ENCODE measurements at regions of chr12 and their contacts with region 1.

Region 1: GRCh38 chr12:2877047-2877952 is at the starts of genes FOXM1 and RHNO1:
- DNase-seq: peak; percentile 81
- H3K4me3 ChIP-seq: peak within 1 kb of the TSS; percentile 63 to 89 (median 77)
- H3K27ac ChIP-seq: peak within 1 kb of the TSS; percentile 89
- H3K4me1 ChIP-seq: peaks cover 18% of the 10 kb centered on the region
- H3K27me3 ChIP-seq: no peaks in the 10 kb centered on the region
- CTCF ChIP-seq: no peak
- total RNA-seq, gene FOXM1: 1.0 to 49.9 TPM
- total RNA-seq, gene RHNO1: 27.0 to 45.1 TPM

Region 2: DNA sequence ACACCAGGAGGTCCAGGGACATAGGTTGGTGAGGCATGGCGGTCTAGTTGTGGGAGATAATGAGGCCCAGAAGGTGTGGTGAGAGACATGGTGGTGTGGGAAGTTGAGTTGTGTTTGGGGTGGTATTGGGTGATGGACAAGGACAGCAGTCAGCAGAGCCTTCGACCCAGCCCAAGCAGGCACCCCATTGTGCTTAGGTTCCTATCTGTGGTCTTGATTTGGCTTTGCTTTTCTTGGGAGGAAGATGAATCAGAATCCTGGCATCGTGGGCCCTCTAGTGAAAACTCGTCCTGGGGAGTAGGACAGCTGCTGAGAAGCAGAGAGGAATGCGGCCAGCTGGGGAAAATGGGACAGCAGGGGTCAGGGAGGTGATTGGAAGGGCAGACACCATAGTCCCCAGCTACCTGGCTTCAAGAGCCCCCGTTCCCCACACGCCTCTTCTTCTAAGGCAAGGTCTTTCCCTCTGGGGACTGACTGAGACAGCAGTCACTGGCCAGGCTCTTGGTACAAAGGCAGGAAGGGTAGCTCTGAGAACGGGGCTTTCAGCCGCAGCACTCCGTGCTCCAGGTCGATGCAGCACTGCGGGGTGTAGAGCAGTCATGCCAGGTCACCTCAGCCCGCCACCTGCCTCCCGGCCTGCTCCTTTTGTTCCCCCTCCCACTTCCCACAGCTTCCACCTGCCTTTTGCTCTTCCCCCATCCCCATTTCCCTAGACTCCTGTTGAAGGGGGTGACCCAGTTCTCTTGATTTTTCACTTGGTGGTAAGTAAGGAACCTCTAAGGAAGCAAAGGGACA is 50.4 kb before region 1 on chr12:
- CTCF ChIA-PET with region 1: no interaction called
- dilution Hi-C with region 1: loop called (anchors 5 kb)
- in situ Hi-C with region 1: no loop called
- intact Hi-C with region 1: no loop called
- DNase-seq: no peak
- H3K4me3 ChIP-seq: no peak overlapping the region
- H3K27ac ChIP-seq: no peak overlapping the region
- H3K4me1 ChIP-seq: no peaks in the 10 kb centered on the region
- H3K27me3 ChIP-seq: no peaks in the 10 kb centered on the region
- CTCF ChIP-seq: no peak

Region 3: DNA sequence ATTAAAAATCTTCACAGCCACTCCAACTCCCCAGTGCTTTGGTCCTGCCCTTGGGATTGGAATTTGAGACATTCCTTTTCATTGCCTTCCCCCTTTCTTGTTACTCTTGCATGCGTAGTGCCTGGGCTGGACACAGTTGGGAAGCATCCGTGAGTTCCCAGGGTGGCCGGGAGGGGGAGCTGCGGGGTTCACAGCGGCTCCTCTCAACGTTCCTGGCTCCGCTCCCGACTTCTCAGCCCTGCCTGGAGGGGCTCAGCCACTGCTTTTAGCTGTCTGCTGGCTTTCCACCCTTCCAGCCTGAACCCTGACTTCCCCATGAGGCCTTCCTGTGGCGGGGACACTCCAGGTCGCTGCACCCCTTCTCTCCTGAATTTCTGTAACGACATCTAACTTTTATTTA is 23.7 kb before region 1 on chr12:
- CTCF ChIA-PET with region 1: interaction called, 10 read pairs
- dilution Hi-C with region 1: no loop called
- in situ Hi-C with region 1: no loop called
- intact Hi-C with region 1: no loop called
- DNase-seq: peak; percentile 35
- H3K4me3 ChIP-seq: no peak overlapping the region
- H3K27ac ChIP-seq: no peak overlapping the region
- H3K4me1 ChIP-seq: no peaks in the 10 kb centered on the region
- H3K27me3 ChIP-seq: no peaks in the 10 kb centered on the region
- CTCF ChIP-seq: peak; percentile 84 to 91

Region 4: GRCh38 chr12:2890388-2891239 is 13.3 kb after region 1 on chr12 and contains the start of gene TULP3:
- CTCF ChIA-PET with region 1: interaction called, 17 read pairs
- dilution Hi-C with region 1: no loop called
- in situ Hi-C with region 1: no loop called
- intact Hi-C with region 1: no loop called
- DNase-seq: peak; percentile 96
- H3K4me3 ChIP-seq: peak within 1 kb of the TSS; percentile 79 to 100 (median 96)
- H3K27ac ChIP-seq: peak within 1 kb of the TSS; percentile 89
- H3K4me1 ChIP-seq: peaks cover 12% of the 10 kb centered on the region
- H3K27me3 ChIP-seq: no peaks in the 10 kb centered on the region
- CTCF ChIP-seq: peak in 1 of 2 donors; percentile 16
- total RNA-seq, gene TULP3: 18.5 to 23.3 TPM

Region 5: GRCh38 chr12:2902272-2902880 is 25.1 kb after region 1 on chr12:
- CTCF ChIA-PET with region 1: no interaction called
- dilution Hi-C with region 1: no loop called
- in situ Hi-C with region 1: no loop called
- intact Hi-C with region 1: no loop called
- DNase-seq: no peak
- H3K4me3 ChIP-seq: no peak overlapping the region
- H3K27ac ChIP-seq: no peak overlapping the region
- H3K4me1 ChIP-seq: no peaks in the 10 kb centered on the region
- H3K27me3 ChIP-seq: no peaks in the 10 kb centered on the region
- CTCF ChIP-seq: no peak

Region 6: GRCh38 chr12:2944401-2945047 is 67.2 kb after region 1 on chr12:
- CTCF ChIA-PET with region 1: no interaction called
- dilution Hi-C with region 1: no loop called
- in situ Hi-C with region 1: loop called (anchors 5 to 10 kb)
- intact Hi-C with region 1: loop called (anchors 2 kb)
- DNase-seq: peak; percentile 46
- H3K4me3 ChIP-seq: peak overlapping the region in 1 of 3 experiments; percentile 24
- H3K27ac ChIP-seq: no peak overlapping the region
- H3K4me1 ChIP-seq: no peaks in the 10 kb centered on the region
- H3K27me3 ChIP-seq: no peaks in the 10 kb centered on the region
- CTCF ChIP-seq: peak; percentile 91 to 92

Measured in mammary epithelial cell (primary cell).